IMR-90 (cell line): ENCODE measurements at regions of chr1 and their contacts with region 1.

Region 1: GRCh38 chr1:31155216-31155841 is 84.4 kb downstream of the NKAIN1 start:
- DNase-seq: peak; percentile 32
- ATAC-seq: peak; percentile 80
- H3K4me3 ChIP-seq: peak overlapping the region; percentile 71
- H3K27ac ChIP-seq: peak overlapping the region; percentile 71
- H3K4me1 ChIP-seq: peaks cover 6% of the 10 kb centered on the region
- H3K27me3 ChIP-seq: no peaks in the 10 kb centered on the region
- CTCF ChIP-seq: peak; percentile 28; the same call in 1 of the 2 replicates
- POLR2A ChIP-seq: peak; percentile 36; the same call in 1 of the 2 replicates
- RAD21 ChIP-seq: no peak

Region 2: GRCh38 chr1:30955448-30956015 is 199.8 kb before region 1 on chr1:
- CTCF ChIA-PET with region 1: no interaction called
- POLR2A ChIA-PET with region 1: no interaction called
- dilution Hi-C with region 1: no loop called
- in situ Hi-C with region 1: no loop called
- intact Hi-C with region 1: loop called (anchors 10 kb)
- DNase-seq: peak; percentile 47
- ATAC-seq: peak; percentile 81
- H3K4me3 ChIP-seq: no peak overlapping the region
- H3K27ac ChIP-seq: peak overlapping the region; percentile 61; the same call in 1 of the 2 replicates
- H3K4me1 ChIP-seq: peaks cover 7% of the 10 kb centered on the region
- H3K27me3 ChIP-seq: no peaks in the 10 kb centered on the region
- CTCF ChIP-seq: no peak
- POLR2A ChIP-seq: no peak
- RAD21 ChIP-seq: no peak

Region 3: DNA sequence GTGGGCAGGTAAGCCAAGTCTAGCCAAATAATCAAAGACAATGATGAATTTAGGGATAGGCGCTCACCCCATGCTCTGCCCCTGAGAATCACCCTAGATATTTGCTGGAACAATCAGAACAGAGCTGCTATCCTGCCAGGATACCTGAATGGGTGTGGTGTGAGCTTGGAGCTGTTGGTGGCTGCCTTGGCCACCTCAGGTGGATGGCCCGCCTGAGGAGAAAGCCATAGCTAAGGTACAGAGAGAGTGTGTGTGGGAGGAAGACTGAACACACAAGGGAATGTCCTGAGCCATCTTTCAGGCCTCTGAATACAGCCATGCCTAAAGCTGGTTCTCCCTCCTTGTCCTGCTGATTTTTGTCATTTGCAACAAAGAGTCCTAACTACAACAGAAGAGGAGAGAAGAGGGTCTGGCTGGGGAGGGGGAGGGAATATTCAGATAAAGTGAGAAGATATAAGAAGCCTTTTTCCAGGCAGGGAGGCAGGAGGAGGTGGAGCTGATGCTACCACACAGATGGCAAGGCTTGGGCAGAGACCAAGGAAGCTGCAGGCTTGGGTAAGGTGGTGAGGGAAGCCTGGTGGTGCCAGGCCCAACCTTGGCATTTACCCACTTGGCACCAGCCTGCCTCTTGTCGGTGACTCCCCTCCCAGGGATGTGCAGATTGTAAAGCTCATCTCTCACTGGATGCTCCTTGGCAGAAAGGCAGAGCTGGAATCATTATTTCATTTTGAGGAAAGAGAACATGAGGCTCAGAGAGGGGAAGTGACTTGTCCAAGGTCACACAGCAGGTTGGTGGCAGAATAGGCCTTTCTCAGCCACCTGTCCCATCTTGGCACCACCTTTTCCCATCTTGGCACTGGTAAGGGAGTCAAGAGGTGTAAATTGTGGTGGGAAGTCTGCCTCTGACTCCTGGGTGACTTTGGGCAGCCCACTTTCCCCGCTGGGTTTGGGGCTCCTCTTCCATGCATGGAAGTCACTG is 34.7 kb after region 1 on chr1:
- CTCF ChIA-PET with region 1: no interaction called
- POLR2A ChIA-PET with region 1: no interaction called
- dilution Hi-C with region 1: no loop called
- in situ Hi-C with region 1: no loop called
- intact Hi-C with region 1: no loop called
- DNase-seq: no peak
- ATAC-seq: no peak
- H3K4me3 ChIP-seq: no peak overlapping the region
- H3K27ac ChIP-seq: no peak overlapping the region
- H3K4me1 ChIP-seq: no peaks in the 10 kb centered on the region
- H3K27me3 ChIP-seq: peaks cover 40% of the 10 kb centered on the region
- CTCF ChIP-seq: no peak
- POLR2A ChIP-seq: no peak
- RAD21 ChIP-seq: no peak